Left ventricle myocardium superior (tissue), 1 donor: ENCODE measurements at regions of chr2 and their contacts with region 1.

Region 1: GRCh38 chr2:174039551-174040416 is 74.6 kb upstream of the SP3 start:
- DNase-seq: peak; percentile 90
- ATAC-seq: peak; percentile 87

Region 2: GRCh38 chr2:173884025-173884802 is 155.6 kb before region 1 on chr2:
- intact Hi-C with region 1: loop called (anchors 10 kb)
- DNase-seq: peak; percentile 75
- ATAC-seq: peak; percentile 78

Region 3: DNA sequence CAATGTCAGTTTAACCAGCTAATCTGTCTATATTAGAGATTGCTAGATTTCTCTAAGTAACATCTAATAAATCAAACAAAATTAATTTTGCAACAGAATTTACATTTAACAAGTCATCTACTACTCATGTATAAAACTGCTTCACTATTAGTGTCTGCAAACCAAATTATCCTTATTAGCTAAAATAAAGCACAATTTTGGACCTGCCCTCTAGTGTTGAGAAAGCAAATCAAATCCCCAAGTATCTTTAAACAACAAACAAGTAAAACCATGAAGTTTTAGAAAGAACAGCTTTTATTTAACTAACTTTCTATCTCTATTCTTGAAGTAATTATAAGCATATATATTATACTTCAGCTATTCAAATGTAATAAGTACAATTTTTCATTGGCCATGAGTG is 38.5 kb after region 1 on chr2:
- intact Hi-C with region 1: no loop called
- DNase-seq: no peak
- ATAC-seq: no peak

Region 4: DNA sequence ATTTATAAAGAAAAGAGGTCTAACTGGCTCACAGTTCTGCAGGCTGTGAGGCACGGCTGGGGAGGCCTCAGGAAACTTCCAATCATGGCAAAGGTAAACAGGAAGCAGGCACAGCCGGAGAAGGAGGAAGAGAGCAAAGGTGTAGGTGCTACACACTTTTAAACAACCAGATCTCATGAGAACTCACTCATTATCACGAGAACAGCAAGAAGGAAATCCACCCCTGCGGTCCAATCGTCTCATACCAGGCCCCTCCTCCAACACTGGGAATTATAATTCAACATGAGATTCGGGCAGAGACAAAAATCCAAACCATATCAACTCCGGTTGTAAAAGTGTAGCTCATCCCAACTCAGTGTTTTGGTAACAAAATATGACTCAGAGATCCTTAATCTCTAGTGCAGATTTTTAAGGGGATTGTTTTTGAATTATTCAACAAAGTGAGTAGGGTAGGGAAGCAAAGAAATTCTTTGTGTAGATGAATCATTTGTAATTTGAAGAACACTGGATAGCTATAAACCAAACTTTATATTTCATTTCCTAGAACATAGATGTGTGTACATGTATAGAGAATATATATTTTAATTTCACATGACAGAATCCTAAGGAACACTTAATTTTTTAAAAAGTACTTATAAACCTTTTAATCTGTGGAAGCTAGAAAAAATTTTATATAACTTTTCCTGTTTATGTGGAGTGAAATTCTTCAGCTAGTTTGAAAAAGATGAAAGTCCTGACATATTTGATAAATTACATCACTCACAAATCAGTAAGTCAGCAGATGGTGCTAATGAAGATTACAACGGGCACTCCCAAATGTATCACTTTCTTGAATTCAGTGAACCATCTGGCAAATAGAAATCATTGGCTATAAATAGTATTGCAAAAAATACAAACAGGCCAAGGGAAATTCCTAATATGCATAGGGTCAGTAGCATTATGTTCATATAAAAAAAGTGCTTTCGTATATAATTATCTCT is 78.5 kb after region 1 on chr2:
- intact Hi-C with region 1: no loop called
- DNase-seq: no peak
- ATAC-seq: no peak